Activated CD4-positive, alpha-beta T cell treated with anti-CD3 and anti-CD28 coated beads, Interleukin-2, amount 10 ng/mL, durations not matched to agents 24 days and 14 days (primary cell): ENCODE measurements at regions of chr20 and their contacts with region 1.

Region 1: GRCh38 chr20:35207950-35208611 is 18.4 kb upstream of the MMP24 start:
- DNase-seq: peak; percentile 93
- H3K4me3 Mint-ChIP-seq: no peak overlapping the region
- H3K27ac Mint-ChIP-seq: no peak overlapping the region
- H3K4me1 Mint-ChIP-seq: no peaks in the 10 kb centered on the region
- H3K27me3 Mint-ChIP-seq: no peaks in the 10 kb centered on the region

Region 2: DNA sequence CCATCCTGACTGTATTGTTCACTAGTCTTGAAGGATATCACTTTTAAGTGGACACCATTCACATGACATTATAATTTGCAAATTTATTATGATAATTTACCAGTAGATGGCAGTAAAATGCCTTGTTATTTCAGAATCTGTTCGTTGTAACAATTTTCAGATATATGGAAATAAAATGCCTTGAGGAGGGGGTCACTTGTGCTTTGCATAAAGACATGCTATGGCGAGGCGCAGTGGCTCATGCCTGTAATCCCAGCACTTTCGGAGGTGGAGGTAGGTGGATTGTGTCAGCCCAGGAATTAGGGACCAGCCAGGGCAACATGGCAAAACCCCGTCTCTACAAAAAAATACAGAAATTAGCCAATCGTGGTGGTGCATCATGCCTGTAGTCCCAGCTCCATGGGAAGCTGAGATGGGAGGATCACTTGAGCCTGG is 373.6 kb before region 1 on chr20:
- intact Hi-C with region 1: loop called (anchors 1 kb)
- DNase-seq: no peak
- H3K4me3 Mint-ChIP-seq: no peak overlapping the region
- H3K27ac Mint-ChIP-seq: no peak overlapping the region
- H3K4me1 Mint-ChIP-seq: peaks cover 2% of the 10 kb centered on the region
- H3K27me3 Mint-ChIP-seq: peaks cover 35% of the 10 kb centered on the region